Endothelial cell of umbilical vein (primary cell): ENCODE measurements at regions of chr16 and their contacts with region 1.

Region 1: DNA sequence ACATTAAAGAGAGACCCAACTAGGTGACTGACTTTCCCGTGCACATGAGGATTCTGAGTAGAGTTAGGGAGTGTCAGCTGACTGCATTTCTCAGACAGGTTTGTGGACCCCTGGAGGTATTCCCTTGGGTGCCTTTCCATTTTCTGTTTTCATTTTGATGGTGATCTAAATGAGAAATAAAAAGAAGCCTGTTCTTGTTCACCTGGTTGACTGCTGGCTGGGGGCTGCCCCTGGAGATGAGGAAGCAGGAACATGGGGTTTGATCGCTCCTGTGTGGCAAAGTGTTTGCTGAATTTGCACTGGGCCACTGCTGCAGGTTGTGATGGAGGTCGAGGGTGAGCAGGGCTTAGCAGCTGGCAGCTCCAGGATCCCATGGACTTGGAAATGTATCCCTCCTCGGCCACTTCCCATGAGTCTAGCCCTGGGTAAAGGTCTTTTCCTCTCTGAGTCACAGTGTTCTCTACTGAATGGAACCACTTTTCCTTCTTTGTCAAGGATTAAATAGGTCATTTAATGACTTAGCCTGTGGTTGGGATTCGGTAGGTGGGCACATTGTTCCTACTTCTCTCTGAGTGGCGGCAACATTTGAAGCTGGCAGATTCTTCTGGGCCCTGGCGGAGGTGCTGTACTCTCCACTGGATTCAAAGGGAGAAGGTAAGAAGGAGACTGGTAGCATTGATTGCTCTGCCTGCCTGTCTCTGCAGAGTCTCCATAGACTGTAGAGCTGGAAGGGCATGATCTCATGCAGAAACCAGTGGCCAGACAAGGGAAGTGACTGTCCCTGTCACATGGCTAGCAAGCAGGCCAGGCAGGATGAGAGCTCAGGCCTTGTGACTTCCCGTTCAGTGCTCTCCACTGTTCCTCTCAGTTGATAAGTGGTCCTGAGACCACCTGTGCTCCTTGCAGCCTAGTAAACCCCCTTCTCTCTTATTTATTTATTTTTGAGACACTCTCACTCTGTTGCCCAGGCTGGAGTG is 17.9 kb downstream of the SNX29 start:
- DNase-seq: peak; percentile 68
- H3K4me3 ChIP-seq: no peak overlapping the region
- H3K27ac ChIP-seq: peak overlapping the region; percentile 83
- H3K4me1 ChIP-seq: peaks cover 11% of the 10 kb centered on the region
- H3K27me3 ChIP-seq: no peaks in the 10 kb centered on the region
- CTCF ChIP-seq: no peak
- POLR2A ChIP-seq: no peak

Region 2: DNA sequence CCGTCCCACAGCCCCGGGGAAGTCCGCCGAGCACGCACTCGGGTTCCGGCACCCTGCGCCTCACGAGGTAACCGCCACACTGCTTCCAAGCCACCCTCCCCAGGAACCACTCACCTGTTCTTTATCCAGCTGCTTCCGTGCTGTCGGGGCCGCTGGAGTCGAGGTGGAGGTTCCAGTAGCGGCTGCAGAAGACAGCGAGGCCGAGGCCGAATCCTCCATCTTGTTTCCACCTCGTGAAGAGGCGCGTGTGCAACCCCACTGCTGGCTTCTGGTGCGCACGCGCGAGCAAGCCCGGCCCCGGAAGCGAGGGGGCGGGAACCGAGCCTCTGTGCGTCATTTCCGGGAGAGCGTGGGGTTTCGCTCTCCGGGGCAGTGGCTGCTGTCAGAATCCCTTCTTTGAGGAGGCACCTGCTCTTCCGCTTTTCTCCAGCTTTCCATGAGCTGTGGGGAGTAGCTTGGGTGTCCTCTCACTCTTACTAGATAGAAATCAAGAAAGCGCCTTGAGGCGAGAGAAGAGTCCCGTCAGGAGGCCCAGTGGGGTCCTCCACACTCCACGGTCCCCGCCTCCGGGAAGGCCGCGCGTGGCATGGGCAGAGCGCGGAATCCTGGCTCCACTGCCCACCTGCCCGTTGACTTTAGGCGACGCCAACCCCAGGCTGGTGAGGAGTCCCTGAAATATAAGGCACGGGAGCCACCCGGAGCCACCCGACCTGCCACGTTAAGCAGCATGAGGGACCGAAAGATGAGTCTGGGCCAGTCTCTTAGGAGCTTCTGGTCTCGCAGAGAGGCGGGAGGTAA is 142.9 kb before region 1 on chr16 and contains the start of gene RSL1D1:
- CTCF ChIA-PET with region 1: no interaction called
- POLR2A ChIA-PET with region 1: no interaction called
- dilution Hi-C with region 1: no loop called
- intact Hi-C with region 1: no loop called
- DNase-seq: peak; percentile 98
- H3K4me3 ChIP-seq: peak within 1 kb of the TSS; percentile 51 to 95 (median 72)
- H3K27ac ChIP-seq: peak within 1 kb of the TSS; percentile 47
- H3K4me1 ChIP-seq: peaks cover 11% of the 10 kb centered on the region
- H3K27me3 ChIP-seq: no peaks in the 10 kb centered on the region
- CTCF ChIP-seq: no peak
- POLR2A ChIP-seq: peak; percentile 98
- total RNA-seq, gene RSL1D1: 127 and 132 TPM in 2 replicates

Region 3: DNA sequence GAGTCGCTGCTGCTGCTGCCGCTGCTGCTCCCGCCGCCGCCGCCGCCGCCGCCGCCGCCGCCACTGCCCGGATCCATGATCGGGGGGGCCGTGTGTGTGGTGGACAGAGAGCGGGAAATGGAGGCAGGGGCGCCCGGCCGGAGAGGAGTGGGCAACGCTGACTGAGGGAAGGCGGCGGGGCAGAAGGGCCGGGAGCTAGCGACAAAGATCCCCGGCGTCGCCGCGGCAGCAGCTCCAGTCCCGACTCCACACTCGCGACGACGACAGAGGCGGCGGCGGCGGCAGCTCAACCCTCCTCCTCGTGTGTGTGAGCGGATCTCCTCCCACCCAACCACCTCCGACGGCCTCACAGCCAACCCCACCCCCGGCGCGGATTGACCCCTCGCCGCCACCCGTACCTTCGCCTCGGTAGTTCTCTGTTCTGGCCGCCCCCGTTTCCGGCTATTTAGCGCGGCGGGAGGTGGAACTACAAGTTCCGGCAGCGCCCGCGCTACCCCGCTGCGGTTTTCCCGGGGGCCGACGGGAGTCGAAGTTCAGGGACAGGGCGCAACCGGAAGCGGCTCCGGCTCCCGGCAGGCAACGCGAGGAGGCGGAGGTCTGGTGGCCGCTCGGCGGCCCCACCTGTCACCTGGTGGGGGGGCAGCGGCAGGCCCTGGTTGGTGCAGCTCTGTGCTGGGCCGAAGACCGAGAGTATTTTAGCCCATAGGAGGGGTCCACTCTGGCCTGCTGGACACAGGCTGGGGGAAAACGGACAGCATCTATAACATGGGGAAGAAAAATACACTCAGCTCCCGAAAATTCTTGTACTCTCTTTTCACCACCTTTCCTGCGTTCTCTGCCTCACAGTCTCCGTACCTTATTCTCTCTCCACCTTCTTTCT is 78.5 kb before region 1 on chr16 and contains the start of gene GSPT1:
- CTCF ChIA-PET with region 1: no interaction called
- POLR2A ChIA-PET with region 1: no interaction called
- dilution Hi-C with region 1: no loop called
- intact Hi-C with region 1: loop called (anchors 5 kb)
- DNase-seq: peak; percentile 99
- H3K4me3 ChIP-seq: peak within 1 kb of the TSS; percentile 68 to 96 (median 77)
- H3K27ac ChIP-seq: peak within 1 kb of the TSS; percentile 76
- H3K4me1 ChIP-seq: peaks cover 24% of the 10 kb centered on the region
- H3K27me3 ChIP-seq: peaks cover 0 to 2% of the 10 kb centered on the region in 2 experiments
- CTCF ChIP-seq: peak in 1 of 2 donors; percentile 9
- POLR2A ChIP-seq: peak; percentile 76
- total RNA-seq, gene GSPT1: 137 and 152 TPM in 2 replicates

Region 4: GRCh38 chr16:11977376-11978041 is 16.9 kb before region 1 on chr16:
- CTCF ChIA-PET with region 1: interaction called, 3 read pairs
- POLR2A ChIA-PET with region 1: no interaction called
- dilution Hi-C with region 1: no loop called
- intact Hi-C with region 1: loop called (anchors 1 kb)
- DNase-seq: peak; percentile 12
- H3K4me3 ChIP-seq: peak overlapping the region; percentile 72 to 97 (median 74)
- H3K27ac ChIP-seq: no peak overlapping the region
- H3K4me1 ChIP-seq: peaks cover 14% of the 10 kb centered on the region
- H3K27me3 ChIP-seq: no peaks in the 10 kb centered on the region
- CTCF ChIP-seq: no peak
- POLR2A ChIP-seq: no peak

Region 5: GRCh38 chr16:12170091-12171040 is 175.9 kb after region 1 on chr16:
- CTCF ChIA-PET with region 1: no interaction called
- POLR2A ChIA-PET with region 1: no interaction called
- dilution Hi-C with region 1: no loop called
- intact Hi-C with region 1: no loop called
- DNase-seq: no peak
- H3K4me3 ChIP-seq: no peak overlapping the region
- H3K27ac ChIP-seq: no peak overlapping the region
- H3K4me1 ChIP-seq: no peaks in the 10 kb centered on the region
- H3K27me3 ChIP-seq: no peaks in the 10 kb centered on the region
- CTCF ChIP-seq: no peak
- POLR2A ChIP-seq: no peak